RWPE1 (cell line): ENCODE measurements at regions of chr2 and their contacts with region 1.

Region 1: GRCh38 chr2:169131587-169132512 is 62.5 kb downstream of the DHRS9 start:
- DNase-seq: peak; percentile 70
- H3K27ac ChIP-seq: no peak overlapping the region
- CTCF ChIP-seq: peak; percentile 85

Region 2: DNA sequence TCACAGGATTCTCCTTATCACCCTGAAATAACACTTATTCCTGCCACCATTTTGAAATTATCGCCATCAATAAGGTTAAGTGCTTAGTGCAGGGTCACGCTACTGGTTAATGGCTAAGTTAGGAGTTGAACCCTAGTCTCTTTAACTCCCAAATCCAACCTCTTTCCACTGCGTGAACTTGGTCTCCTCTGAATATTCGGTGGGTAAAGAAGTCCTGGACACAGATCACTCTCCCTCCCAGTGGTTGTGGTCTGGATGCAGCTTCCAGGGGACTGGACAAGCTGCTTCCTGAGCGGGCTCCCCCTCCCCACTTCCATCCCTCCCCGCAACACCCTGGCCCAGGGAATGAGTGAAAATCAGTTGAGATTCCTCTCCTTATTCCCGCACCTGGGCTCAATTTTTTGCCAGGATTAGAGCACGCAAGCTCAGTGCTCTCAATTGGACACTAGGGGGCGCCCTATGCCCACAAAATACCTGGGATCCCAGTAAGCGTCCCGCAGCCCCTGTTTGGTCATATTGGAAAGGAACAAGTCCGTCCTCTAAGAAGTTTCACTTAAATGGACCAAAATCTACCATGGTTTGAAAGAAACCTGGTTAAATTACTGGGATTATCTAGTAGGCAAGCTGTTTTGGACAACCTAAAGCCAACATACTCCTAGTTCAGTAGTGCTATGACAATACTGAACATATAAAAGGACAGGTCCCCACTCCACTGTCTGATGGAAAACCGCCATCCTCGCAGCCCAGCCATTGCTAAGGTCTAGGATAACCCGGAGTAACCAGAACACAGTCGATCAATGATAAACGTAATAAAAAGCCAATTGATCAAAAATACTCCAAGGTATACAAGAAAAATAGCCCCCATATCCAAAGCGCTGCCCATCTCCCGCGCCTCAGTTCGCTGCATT is 22.1 kb before region 1 on chr2:
- CTCF ChIA-PET with region 1: interaction called, 25 read pairs
- POLR2A ChIA-PET with region 1: no interaction called
- DNase-seq: peak; percentile 86
- H3K27ac ChIP-seq: no peak overlapping the region
- CTCF ChIP-seq: peak; percentile 82

Region 3: DNA sequence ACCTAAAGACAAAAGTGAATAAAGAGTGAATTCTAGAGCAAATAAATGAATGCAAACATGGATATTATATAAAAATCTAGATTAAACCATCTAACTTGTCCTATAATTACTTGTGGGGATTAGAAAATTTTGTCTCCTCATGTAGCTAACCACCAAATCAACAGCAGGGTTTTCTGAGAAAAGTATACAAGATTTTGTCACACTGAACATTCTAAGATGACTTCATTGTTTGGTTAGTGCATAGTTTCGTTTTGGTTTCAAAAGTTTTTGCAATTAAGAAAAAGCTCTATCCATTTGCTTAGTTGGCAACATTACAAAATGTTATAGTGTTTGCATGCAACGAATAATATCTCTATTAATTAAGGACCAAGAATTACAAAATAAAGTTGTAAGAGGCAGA is 105.4 kb after region 1 on chr2:
- CTCF ChIA-PET with region 1: no interaction called
- POLR2A ChIA-PET with region 1: no interaction called
- DNase-seq: no peak
- H3K27ac ChIP-seq: no peak overlapping the region
- CTCF ChIP-seq: no peak